ENCODE measurements at regions of chr6 and their contacts with region 1.

Region 1: GRCh38 chr6:26520853-26521599 is 17.1 kb upstream of the HMGN4 start:
- DNase-seq: peak; percentile 78 to 89
- H3K4me3 ChIP-seq: peak overlapping the region; percentile 85
- H3K27ac ChIP-seq: peak overlapping the region; percentile 93
- H3K4me1 ChIP-seq: peaks cover 29% of the 10 kb centered on the region
- H3K27me3 ChIP-seq: no peaks in the 10 kb centered on the region
- CTCF ChIP-seq: no peak

Region 2: GRCh38 chr6:26473758-26474438 is 47.1 kb before region 1 on chr6:
- CTCF ChIA-PET with region 1: no interaction called
- POLR2A ChIA-PET with region 1: interaction called, 3 read pairs
- intact Hi-C with region 1: loop called (anchors 1 kb)
- DNase-seq: peak; percentile 75 to 88
- H3K4me3 ChIP-seq: peak overlapping the region; percentile 62
- H3K27ac ChIP-seq: peak overlapping the region; percentile 76
- H3K4me1 ChIP-seq: peaks cover 29% of the 10 kb centered on the region
- H3K27me3 ChIP-seq: no peaks in the 10 kb centered on the region
- CTCF ChIP-seq: no peak

Region 3: DNA sequence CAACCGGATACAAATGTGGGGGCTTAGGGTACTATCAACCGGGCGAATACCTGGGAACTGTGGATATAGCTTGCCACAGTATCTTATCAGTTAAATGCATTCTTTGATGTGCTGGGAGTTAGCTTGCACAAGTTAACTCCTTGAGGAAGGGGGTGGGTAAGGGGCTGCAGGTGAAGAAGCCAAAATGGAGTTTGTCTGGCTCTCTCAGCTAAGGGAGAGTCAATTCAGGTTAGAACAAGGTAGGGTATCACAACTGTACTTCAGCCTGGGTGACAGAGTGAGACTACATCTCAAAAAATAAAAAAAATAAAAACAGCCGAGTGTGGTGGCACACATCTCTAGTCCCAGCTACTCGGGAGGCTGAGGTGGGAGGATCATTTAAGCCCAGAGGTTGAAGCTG is 29.4 kb before region 1 on chr6:
- CTCF ChIA-PET with region 1: no interaction called
- POLR2A ChIA-PET with region 1: no interaction called
- intact Hi-C with region 1: no loop called
- DNase-seq: no peak
- H3K4me3 ChIP-seq: no peak overlapping the region
- H3K27ac ChIP-seq: no peak overlapping the region
- H3K4me1 ChIP-seq: no peaks in the 10 kb centered on the region
- H3K27me3 ChIP-seq: no peaks in the 10 kb centered on the region
- CTCF ChIP-seq: no peak

Region 4: DNA sequence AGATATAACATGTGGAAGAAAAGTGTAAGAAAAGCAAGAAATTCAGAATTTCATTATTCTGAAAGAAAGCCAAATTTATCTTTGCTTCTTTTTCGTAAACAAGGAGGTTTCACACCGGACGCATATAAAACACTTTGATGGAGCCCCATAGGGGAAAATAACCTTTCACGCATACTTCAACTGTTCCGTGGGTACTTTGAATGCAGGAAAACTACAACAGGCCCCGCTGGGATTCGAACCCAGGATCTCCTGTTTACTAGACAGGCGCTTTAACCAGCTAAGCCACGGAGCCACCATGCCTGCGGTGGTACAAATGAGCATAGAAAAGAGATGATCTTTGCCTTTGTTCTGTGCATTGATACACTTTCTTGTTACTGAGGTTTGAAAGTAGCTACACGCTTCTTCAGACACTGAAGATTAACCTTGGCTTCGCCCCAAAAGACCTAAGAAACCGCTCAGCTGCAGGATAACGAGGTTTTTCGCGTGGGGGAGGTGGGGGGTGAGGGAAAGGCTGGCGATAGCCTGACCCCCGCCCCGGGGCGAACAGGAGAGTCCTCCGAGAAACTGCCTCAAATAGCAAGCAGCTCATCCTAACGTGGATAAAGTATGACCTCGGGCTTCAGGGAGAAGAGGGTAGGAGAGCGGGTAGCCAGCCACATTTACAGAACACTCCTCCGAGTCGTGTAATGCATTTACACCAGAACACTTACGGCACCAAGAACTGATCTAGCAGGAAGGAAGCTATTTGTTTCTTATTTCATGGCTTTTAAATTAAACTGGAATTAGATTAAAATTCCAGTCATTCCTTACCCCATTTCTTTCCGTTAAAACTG is 11.9 kb after region 1 on chr6:
- CTCF ChIA-PET with region 1: no interaction called
- POLR2A ChIA-PET with region 1: interaction called, 8 read pairs
- intact Hi-C with region 1: loop called (anchors 1 kb)
- DNase-seq: peak; percentile 75 to 89
- H3K4me3 ChIP-seq: peak overlapping the region; percentile 81
- H3K27ac ChIP-seq: peak overlapping the region; percentile 21; the same call in 1 of the 2 replicates
- H3K4me1 ChIP-seq: peaks cover 15% of the 10 kb centered on the region
- H3K27me3 ChIP-seq: no peaks in the 10 kb centered on the region
- CTCF ChIP-seq: no peak

Region 5: DNA sequence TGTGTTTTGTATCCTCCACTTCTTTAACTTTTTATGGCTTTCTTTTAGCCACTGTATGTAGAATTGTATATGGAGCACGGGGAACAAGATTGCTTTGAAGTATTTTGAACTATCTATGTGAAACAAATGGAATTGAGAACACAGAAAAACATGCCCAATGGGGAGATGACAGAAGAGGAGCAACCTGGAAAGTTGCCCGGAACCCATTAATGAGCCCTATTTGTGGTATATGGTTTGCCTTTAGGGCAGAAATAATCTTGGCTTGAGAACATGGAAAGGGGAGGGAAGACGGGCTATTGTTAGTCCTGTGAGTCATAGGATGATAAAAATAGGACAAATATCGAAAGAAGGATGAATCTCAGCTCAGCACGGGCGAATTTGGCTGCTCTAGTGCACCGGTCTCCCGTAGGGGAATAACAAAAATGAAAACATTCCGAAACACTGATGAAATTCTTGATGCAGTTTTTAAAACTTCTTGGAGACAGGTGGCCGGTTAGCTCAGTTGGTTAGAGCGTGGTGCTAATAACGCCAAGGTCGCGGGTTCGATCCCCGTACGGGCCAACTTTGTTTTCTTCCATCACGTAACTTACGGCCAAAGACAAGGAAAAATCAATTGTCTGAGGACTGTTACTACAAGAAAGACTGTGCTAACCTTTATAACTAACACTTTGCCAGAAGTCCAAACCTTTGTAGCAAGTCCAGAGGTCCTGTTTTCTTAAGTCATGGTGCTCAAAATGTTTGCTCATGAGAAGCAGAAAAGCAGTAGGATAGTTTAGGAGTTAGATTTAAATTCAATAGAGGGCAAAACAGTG is 32.8 kb after region 1 on chr6:
- CTCF ChIA-PET with region 1: no interaction called
- POLR2A ChIA-PET with region 1: interaction called, 7 read pairs
- intact Hi-C with region 1: loop called (anchors 1 kb)
- DNase-seq: peak; percentile 85 to 87
- H3K4me3 ChIP-seq: peak overlapping the region; percentile 69
- H3K27ac ChIP-seq: peak overlapping the region; percentile 60
- H3K4me1 ChIP-seq: peaks cover 31% of the 10 kb centered on the region
- H3K27me3 ChIP-seq: no peaks in the 10 kb centered on the region
- CTCF ChIP-seq: no peak